Posterior vena cava (tissue), 2 donors: ENCODE measurements at regions of chr3 and their contacts with region 1.

Region 1: GRCh38 chr3:51501833-51502561 is 2.2 kb upstream of the DCAF1 start:
- DNase-seq: peak; percentile 93

Region 2: GRCh38 chr3:51198477-51198876 is 303.5 kb before region 1 on chr3:
- intact Hi-C with region 1: no loop called
- DNase-seq: no peak

Region 3: GRCh38 chr3:51391075-51391567 is 110.9 kb before region 1 on chr3 and contains the start of gene RBM15B:
- intact Hi-C with region 1: no loop called
- DNase-seq: peak; percentile 100
- total RNA-seq, gene RBM15B: 20.2 to 22.7 TPM

Region 4: DNA sequence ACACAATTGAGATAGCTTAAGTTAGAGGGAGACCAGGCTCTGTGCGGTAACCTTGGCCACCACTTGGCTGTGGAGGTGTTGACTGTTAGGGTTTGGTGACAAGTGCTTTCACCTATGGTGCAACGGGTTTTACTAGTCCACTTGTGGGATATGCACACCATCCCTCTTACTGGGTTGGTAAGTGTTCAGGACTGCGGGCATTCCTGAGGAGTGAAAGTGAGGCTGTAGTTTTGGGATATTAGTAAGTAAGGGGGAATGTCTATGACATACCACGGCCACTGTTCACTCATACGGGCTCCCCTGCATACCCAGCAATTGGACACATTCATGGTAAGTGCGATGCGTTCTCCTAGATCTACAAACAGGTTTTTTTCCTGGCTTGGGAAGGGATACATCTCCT is 28.5 kb after region 1 on chr3:
- intact Hi-C with region 1: no loop called
- DNase-seq: no peak

Region 5: DNA sequence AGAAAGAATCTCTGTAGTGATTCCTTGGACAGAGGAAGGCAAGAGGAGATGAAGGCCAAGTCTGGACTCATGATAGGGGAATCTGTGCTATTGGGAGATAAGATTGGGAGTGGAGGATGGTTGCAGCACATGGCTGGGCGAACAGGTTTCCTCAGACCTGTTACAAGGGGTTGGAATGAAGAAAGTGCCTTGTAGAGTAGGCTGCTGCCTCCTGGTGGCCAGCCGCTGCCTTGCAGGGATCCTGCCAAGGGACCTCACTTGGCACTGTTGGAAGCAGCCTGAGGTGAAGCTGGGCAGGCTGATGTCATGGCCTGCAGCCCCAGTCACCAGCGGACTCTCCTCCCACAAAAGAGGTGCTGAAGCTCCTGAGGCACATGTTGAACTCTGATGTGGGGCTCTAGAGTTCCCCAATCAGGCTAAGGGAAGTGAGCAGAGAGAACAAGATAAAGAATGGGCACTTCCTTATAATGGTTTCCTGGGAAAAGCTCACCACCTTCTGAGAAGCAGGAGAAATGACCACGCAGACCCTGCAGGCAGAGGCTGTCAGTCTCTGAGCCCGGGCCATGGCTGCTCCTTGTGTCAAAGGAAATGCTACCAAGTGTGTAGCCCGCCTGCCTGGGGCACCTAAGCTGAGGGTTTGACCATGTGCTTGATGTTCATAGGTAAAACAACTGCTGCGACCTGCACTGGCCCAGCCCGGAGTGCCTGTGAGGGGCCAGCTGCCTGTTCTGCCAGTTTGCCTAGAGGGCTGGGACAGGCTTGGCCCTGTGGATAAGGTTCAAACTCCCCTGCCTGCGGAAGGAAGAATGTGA is 167.4 kb after region 1 on chr3:
- intact Hi-C with region 1: loop called (anchors 5 kb)
- DNase-seq: peak; percentile 94

Region 6: DNA sequence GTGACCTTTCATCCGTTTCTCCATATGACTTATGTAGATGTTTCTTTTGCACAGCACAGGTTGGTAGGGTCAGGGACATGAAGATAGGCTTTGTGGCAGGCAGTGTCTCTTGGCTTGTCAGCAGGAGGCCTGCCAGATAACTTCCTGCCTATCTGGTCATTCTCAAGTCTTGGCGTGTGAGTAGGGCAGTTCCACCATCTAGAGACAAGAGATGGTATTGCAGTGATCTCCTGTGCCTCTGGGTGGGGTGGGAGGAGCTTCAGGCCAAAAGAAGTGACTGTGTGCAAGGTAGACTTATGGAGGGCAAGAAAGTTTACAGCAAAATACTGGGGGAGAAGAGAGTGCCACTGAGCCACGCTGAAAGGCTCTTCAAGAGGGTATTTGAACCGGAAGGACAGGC is 180.1 kb after region 1 on chr3:
- intact Hi-C with region 1: loop called in 1 of 2 experiments (anchors 5 kb)
- DNase-seq: no peak

Region 7: GRCh38 chr3:51799879-51800749 is 298.1 kb after region 1 on chr3:
- intact Hi-C with region 1: loop called (anchors 5 kb)
- DNase-seq: no peak